ENCODE measurements at regions of chr7 and their contacts with region 1.

Region 1: DNA sequence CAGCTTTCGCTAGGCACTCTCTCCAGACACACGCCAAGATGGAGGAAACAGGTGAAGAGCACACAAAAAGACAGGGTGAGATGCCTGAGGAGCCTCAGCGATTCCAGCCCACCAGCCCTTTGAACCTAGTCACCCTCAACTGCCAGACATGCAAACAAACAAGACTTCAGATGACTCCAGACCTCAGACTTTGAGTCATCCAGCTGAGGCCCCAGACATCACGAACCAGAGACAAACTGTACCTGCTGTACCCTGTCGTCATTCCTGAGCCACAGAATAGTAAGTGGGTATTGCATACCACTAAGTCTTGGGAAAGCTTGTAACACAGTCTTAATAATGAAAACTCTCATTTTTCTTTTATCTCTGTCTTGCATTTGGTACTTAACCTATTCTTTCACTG is 126.6 kb upstream of the LSM8 start:
- DNase-seq: no peak
- H3K4me3 ChIP-seq: no peak overlapping the region
- H3K27ac ChIP-seq: no peak overlapping the region
- H3K4me1 ChIP-seq: no peaks in the 10 kb centered on the region
- H3K27me3 ChIP-seq: no peaks in the 10 kb centered on the region
- CTCF ChIP-seq: no peak
- POLR2A ChIP-seq: no peak

Region 2: DNA sequence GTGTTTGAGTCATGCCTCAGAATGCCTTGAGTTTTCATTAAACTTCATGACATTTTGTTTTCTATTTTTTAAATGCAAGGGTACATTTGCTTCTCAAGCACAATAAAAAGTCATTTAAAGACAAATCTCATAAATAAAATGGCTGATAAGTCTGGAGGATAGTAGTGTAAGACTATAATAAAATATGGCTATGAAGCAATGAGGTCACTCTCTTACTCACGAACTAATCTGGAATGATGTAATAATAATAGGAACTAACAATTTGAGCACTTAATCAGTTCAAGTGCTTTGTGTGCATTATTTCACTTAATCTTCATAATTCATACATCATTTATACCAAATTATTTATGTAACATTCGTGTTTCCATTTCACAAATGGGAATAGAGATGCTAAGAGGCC is 34.9 kb before region 1 on chr7:
- intact Hi-C with region 1: loop called (anchors 2 kb)
- DNase-seq: no peak
- H3K4me3 ChIP-seq: no peak overlapping the region
- H3K27ac ChIP-seq: no peak overlapping the region
- H3K4me1 ChIP-seq: no peaks in the 10 kb centered on the region
- H3K27me3 ChIP-seq: no peaks in the 10 kb centered on the region
- CTCF ChIP-seq: no peak
- POLR2A ChIP-seq: no peak